Thyroid gland (tissue), 4 donors: ENCODE measurements at regions of chr11 and their contacts with region 1.

Region 1: GRCh38 chr11:110429731-110430266 is at the start of gene FDX1:
- DNase-seq: peak; percentile 87 to 89
- H3K4me3 ChIP-seq: peak within 1 kb of the TSS; percentile 56 to 74 (median 61)
- H3K27ac ChIP-seq: peak within 1 kb of the TSS; percentile 88 to 92 (median 89)
- H3K4me1 ChIP-seq: peaks cover 32 to 35% of the 10 kb centered on the region in 2 donors
- H3K27me3 ChIP-seq: no peaks in the 10 kb centered on the region
- CTCF ChIP-seq: peak in 4 of 6 experiments; percentile 50 to 86 (median 73)
- POLR2A ChIP-seq: peak; percentile 40 to 90
- total RNA-seq, gene FDX1: 28.9 to 58.5 (median 39.6) TPM

Region 2: GRCh38 chr11:109946322-109946846 is 483.4 kb before region 1 on chr11:
- intact Hi-C with region 1: loop called (anchors 5 kb)
- DNase-seq: peak; percentile 92 to 93
- H3K4me3 ChIP-seq: no peak overlapping the region
- H3K27ac ChIP-seq: peak overlapping the region; percentile 43 to 73 (median 73)
- H3K4me1 ChIP-seq: no peaks in the 10 kb centered on the region
- H3K27me3 ChIP-seq: no peaks in the 10 kb centered on the region
- CTCF ChIP-seq: peak; percentile 85 to 98 (median 92)
- POLR2A ChIP-seq: peak in 1 of 2 donors; percentile 69

Region 3: DNA sequence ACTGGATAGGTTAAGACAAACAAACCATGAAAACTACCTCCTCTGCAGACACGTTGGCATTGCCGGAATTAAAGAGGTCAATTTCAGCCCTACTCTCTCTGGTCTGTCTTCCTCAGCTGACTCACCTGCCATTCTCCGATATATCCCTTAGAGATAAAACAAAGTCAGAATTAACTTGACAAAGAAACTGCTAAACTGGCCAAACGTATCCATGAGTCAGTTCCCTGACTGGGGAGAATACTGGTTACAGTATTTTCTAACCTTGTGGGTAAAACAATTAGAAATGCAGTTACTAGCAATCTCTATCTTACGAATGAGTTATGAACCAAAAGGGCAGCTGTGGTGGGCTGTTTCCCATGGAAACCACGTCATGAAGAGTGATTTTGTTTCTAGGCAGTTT is 229.6 kb before region 1 on chr11:
- intact Hi-C with region 1: loop called (anchors 5 kb)
- DNase-seq: no peak
- H3K4me3 ChIP-seq: no peak overlapping the region
- H3K27ac ChIP-seq: no peak overlapping the region
- H3K4me1 ChIP-seq: no peaks in the 10 kb centered on the region
- H3K27me3 ChIP-seq: no peaks in the 10 kb centered on the region
- CTCF ChIP-seq: no peak
- POLR2A ChIP-seq: no peak

Region 4: DNA sequence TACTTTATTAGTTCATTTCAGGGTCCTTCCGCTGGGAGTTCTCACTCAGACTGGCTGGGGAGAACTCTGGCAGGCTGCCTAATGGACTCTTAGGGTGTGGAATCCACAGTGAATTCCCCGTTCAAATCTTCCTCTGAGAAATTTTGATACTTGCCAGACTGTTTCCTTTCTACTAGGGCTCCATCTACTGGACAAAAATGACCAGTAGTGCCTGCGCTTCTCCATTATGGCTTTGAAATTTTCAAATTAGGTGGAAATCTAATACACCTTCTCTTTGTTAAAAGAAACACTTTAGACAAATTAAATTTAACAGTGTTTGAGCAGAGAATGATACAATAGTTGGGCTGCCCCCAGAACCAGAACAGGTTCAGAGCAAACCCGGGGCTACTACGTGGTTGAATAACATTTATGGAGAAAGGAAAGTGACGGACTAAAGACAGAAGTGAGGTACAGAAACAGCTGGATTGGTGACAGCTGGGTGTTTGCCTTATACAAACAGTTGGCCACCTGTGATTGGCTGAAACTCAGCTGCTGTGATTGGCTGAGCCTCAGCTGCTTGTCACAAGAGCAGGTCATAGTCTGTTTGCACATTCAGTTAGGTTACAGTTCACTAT is 53.0 kb before region 1 on chr11:
- intact Hi-C with region 1: loop called (anchors 5 kb)
- DNase-seq: peak; percentile 79 to 87
- H3K4me3 ChIP-seq: no peak overlapping the region
- H3K27ac ChIP-seq: peak overlapping the region; percentile 43 to 72 (median 69)
- H3K4me1 ChIP-seq: peaks cover 0 to 6% of the 10 kb centered on the region in 2 donors
- H3K27me3 ChIP-seq: no peaks in the 10 kb centered on the region
- CTCF ChIP-seq: peak; percentile 40 to 86 (median 72)
- POLR2A ChIP-seq: no peak